Heart left ventricle (tissue), 16 donors: ENCODE measurements at regions of chr1 and their contacts with region 1.

Region 1: DNA sequence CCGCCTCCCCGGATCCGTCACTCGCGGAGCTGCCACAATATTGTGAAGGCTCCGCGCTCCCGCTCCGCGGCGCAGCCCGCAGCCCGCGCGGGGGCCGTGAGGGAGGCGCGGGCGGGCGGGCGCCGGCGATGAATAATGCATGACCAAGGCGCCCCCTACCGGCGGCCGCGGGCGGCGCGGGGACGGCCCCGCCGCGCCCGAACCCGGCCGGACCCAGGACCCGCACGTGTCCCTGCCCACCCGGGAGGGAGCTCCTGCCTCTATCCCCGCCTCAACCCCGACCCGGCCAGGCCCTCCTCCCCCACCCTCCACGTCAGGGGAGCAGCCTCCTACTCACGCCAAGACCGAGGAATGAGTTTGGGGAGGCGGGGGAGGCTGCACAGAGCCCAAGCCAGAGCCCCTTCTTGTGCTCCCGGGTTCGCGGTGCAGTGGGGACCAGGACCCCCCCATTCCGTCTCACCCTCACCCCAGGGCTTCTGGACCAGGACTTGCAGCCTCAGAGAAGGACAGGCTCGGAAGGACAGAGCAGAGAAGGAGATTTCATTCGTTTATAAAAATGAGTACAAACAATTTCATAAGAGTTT is 70.8 kb upstream of the CASZ1 start:
- DNase-seq: peak; percentile 42 to 77 (median 57)
- ATAC-seq: peak in 3 of 4 donors; percentile 38 to 81 (median 77)
- H3K4me3 ChIP-seq: peak overlapping the region in 11 of 12 donors; percentile 18 to 61 (median 49)
- H3K27ac ChIP-seq: peak overlapping the region in 2 of 12 donors; percentile 23 to 65
- H3K4me1 ChIP-seq: peaks cover 0 to 35% (median 13%) of the 10 kb centered on the region in 12 donors
- H3K27me3 ChIP-seq: peaks cover 0 to 67% (median 13%) of the 10 kb centered on the region in 9 donors
- CTCF ChIP-seq: peak; percentile 26 to 96 (median 78)
- POLR2A ChIP-seq: no peak

Region 2: GRCh38 chr1:10514490-10515235 is 352.6 kb before region 1 on chr1:
- intact Hi-C with region 1: loop called in 8 of 10 experiments (anchors 5 kb)
- DNase-seq: no peak
- ATAC-seq: peak in 3 of 4 donors; percentile 18 to 41 (median 40)
- H3K4me3 ChIP-seq: no peak overlapping the region
- H3K27ac ChIP-seq: peak overlapping the region in 1 of 12 donors; percentile 51
- H3K4me1 ChIP-seq: peaks cover 5 to 61% (median 34%) of the 10 kb centered on the region in 12 donors
- H3K27me3 ChIP-seq: no peaks in the 10 kb centered on the region
- CTCF ChIP-seq: peak in 11 of 12 donors; percentile 31 to 64 (median 53)
- POLR2A ChIP-seq: no peak

Region 3: DNA sequence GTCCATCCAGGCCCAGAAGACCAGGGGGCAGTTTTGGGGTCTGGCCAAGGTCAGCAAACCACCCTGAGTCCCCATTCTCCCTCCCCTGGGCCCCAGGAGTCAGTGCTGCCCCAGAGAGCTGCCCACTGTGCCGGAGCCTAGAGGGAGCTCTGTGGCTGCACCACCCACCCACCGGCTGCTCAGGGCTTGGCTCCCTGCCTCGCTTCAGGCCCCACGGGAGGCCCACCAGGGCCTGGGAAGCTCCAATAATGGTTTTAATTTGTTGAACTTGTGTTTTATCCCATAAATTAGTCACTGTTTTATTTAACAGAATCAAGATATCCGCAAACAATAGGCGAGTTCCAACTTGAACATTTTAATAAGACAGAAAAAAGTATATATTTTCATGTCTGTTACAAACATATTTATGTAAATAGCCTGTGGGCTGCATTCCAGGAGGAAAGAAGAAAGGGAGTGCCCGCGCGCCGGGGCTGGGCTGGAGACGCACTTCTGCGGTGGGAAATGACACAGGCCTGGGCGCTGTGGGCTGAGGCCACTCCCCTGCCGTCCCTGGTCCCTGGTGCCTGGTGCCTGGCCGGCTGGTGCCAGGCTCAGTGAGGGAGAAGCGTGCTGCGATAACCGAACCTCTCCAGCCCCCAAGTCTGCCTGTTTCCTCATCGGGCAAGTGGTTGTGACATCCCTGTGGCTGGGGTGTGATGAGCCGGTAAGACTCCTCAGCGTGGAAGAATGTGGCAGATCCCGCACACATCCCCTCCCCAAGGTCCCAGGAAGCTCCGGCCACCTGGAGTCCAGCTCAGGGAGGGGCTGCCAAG is 231.9 kb before region 1 on chr1:
- intact Hi-C with region 1: loop called in 2 of 10 experiments (anchors 5 to 10 kb)
- DNase-seq: peak in 2 of 5 donors; percentile 44 to 73
- ATAC-seq: peak in 3 of 4 donors; percentile 25 to 50 (median 40)
- H3K4me3 ChIP-seq: no peak overlapping the region
- H3K27ac ChIP-seq: peak overlapping the region; percentile 15 to 77 (median 56)
- H3K4me1 ChIP-seq: peaks cover 0 to 35% (median 18%) of the 10 kb centered on the region in 12 donors
- H3K27me3 ChIP-seq: peaks cover 0 to 7% (median 0%) of the 10 kb centered on the region in 9 donors
- CTCF ChIP-seq: peak in 1 of 12 donors; percentile 16
- POLR2A ChIP-seq: no peak

Region 4: DNA sequence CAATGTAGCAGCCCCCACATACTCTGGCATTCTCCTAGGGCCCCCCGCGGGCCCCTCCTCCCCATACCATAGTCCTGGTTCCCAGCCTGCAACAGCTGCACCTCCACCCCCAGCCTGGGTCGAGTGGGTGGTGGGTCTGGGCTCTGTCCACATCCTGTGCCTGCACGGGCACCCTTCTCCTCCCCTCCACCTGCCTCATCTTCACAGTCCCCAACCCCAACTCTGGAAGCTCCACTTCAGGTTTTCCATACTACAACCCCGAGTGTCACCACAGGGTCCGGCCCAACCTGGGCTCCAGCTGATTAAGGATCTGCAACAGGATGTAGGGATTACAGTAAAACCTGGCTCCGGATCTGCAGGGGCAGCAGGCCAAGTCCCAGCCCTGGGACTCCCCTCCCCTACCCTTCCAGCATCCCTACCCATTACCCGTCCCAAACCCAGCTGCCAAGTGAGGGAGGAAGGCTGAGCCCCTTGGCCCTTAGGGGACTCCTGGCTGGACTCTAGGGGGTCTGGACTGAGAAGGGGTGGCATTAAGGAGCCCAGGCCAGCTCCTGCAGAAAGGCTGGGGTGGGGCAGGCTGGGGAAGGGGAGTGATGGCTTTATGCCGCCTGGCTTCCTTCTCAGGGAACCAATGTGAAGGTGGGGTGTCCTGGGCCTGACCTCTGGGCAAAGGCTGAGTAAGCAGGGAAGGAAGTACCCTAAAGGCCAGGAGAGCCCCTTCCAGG is 187.6 kb before region 1 on chr1:
- intact Hi-C with region 1: loop called in 2 of 10 experiments (anchors 10 kb)
- DNase-seq: peak in 4 of 5 donors; percentile 47 to 59 (median 56)
- ATAC-seq: peak in 1 of 4 donors; percentile 17
- H3K4me3 ChIP-seq: peak overlapping the region in 1 of 12 donors; percentile 2
- H3K27ac ChIP-seq: peak overlapping the region in 8 of 12 donors; percentile 38 to 94 (median 52)
- H3K4me1 ChIP-seq: peaks cover 15 to 100% (median 87%) of the 10 kb centered on the region in 12 donors
- H3K27me3 ChIP-seq: no peaks in the 10 kb centered on the region
- CTCF ChIP-seq: no peak
- POLR2A ChIP-seq: no peak

Region 5: DNA sequence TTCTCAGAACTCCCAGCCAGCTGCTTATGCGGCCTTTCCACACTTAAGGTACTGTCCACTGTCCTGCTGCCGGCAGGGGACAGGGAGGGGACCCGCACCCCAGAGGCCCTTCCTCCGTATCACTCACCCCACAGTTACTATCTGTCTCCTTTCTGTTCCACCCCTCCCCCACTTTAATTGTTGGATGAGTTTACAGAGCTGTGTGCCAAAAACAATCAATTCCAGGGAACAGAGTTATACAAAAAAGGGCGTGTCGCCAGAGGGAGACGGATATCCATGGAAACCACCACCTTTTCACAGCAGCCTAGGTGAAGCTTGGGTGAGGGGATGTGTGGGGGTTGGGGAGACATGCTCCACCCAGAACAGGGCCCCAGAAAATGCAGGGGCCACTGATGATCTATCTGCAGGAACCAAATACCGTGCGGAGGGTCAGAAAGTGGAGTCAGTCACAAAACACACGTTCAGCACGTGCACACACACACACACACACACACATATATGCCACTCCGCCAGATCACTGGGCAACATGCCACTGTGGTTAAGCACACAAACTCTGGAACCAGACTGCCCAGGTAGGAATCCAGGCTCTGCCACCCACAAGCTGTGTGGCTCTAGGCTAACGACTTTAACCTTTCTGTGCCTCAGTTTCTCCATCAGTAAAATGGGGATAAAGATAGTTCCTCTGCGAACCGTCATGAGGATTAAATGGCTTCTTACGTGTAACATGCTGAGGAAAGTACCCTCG is 101.3 kb before region 1 on chr1:
- intact Hi-C with region 1: no loop called
- DNase-seq: no peak
- ATAC-seq: peak; percentile 7 to 26 (median 17)
- H3K4me3 ChIP-seq: no peak overlapping the region
- H3K27ac ChIP-seq: peak overlapping the region in 9 of 12 donors; percentile 4 to 86 (median 39)
- H3K4me1 ChIP-seq: peaks cover 3 to 80% (median 59%) of the 10 kb centered on the region in 12 donors
- H3K27me3 ChIP-seq: no peaks in the 10 kb centered on the region
- CTCF ChIP-seq: no peak
- POLR2A ChIP-seq: no peak

Region 6: DNA sequence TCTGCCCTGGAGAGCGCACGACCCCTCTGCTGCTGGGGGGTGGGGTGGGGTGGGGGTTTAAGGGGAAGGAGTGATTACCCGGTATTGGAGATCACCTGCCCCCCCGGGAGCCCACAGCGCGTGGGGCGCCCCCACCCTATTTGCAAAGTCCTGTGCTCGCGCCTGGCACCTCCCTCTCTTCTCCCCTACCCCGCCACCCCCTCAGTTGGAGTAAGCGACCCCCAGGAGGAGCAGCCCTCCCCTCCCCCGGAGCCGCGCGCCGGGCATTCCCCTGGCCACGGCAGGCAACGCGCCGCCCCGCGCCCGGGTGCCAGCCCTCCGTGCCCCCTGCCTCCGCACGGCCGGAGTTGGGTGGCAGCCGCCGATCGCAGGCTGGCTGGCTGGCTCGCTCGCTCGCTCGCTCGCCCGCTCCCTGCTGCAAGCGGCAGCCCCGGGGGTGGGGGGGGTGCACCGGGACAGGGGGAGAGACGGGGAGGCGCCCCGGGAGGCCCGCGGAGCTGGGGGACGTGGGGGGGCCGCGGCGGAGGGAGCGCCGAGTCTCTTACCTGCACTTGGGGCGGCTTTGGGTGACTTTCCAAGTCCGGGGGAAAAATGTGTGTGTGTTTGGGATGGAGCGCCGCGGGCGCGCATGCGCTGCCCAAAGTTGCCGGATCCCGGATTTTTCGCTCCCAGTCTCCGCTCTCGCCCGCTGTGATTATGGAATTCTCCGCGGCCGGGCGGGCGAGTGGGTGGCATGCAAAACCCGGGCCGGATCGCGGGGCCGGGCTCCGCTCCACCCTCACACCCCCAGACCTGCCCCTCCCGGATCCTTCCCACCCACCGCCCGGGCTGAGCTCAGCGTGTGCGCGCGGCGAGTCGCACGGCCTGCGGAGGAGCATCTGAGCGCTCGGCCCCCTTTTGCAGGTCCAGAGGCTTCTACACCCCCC is 70.9 kb before region 1 on chr1 and contains the start of gene CASZ1:
- intact Hi-C with region 1: loop called in 8 of 10 experiments (anchors 2 to 10 kb)
- DNase-seq: peak; percentile 83 to 90 (median 85)
- ATAC-seq: peak; percentile 39 to 71 (median 62)
- H3K4me3 ChIP-seq: peak within 1 kb of the TSS; percentile 50 to 95 (median 76)
- H3K27ac ChIP-seq: peak within 1 kb of the TSS; percentile 76 to 98 (median 92)
- H3K4me1 ChIP-seq: peaks cover 0 to 43% (median 11%) of the 10 kb centered on the region in 12 donors
- H3K27me3 ChIP-seq: peaks cover 0 to 59% (median 0%) of the 10 kb centered on the region in 9 donors
- CTCF ChIP-seq: no peak
- POLR2A ChIP-seq: peak in 1 of 2 donors; percentile 56
- total RNA-seq, gene CASZ1: 39.5 to 84.9 (median 63.2) TPM

Region 7: GRCh38 chr1:10835423-10836421 is 31.5 kb before region 1 on chr1:
- intact Hi-C with region 1: no loop called
- DNase-seq: peak in 3 of 5 donors; percentile 32 to 56 (median 41)
- ATAC-seq: peak; percentile 39 to 86 (median 82)
- H3K4me3 ChIP-seq: peak overlapping the region in 1 of 12 donors; percentile 7
- H3K27ac ChIP-seq: no peak overlapping the region
- H3K4me1 ChIP-seq: peaks cover 0 to 8% (median 0%) of the 10 kb centered on the region in 12 donors
- H3K27me3 ChIP-seq: peaks cover 0 to 50% (median 14%) of the 10 kb centered on the region in 9 donors
- CTCF ChIP-seq: peak in 2 of 12 donors; percentile 6 to 26
- POLR2A ChIP-seq: no peak